ENCODE measurements at regions of chr6 and their contacts with region 1.

Region 1: GRCh38 chr6:39892490-39893129 is 41.7 kb downstream of the MOCS1 start:
- DNase-seq: peak in 5 of 6 donors; percentile 45 to 82 (median 66)
- ATAC-seq: peak; percentile 85 to 95 (median 92)
- H3K4me3 ChIP-seq: no peak overlapping the region
- H3K27ac ChIP-seq: no peak overlapping the region
- H3K4me1 ChIP-seq: no peaks in the 10 kb centered on the region
- H3K27me3 ChIP-seq: no peaks in the 10 kb centered on the region
- CTCF ChIP-seq: peak; percentile 48 to 66 (median 62)

Region 2: DNA sequence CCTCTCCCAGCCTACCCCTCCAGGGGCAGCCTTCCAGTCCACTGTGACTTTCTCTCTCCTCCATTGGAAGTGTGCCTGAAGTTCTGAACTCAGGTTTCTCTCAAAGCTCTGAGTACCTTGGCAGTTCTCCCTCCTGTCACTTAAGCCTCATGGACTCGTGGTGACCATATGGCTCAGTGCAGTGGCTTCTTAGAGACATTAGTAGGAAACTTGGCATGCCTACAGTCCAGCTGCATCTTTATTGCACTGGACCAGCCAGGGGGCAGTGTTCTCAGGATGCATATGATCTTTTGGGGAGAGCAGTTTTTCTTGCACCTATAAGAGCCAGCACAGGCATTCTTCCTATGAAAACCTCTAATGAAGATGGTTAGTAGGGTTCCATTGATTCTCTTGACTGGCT is 522.6 kb before region 1 on chr6:
- intact Hi-C with region 1: loop called in 2 of 3 experiments (anchors 5 to 10 kb)
- DNase-seq: peak in 2 of 6 donors; percentile 16 to 29
- ATAC-seq: peak; percentile 48 to 74 (median 68)
- H3K4me3 ChIP-seq: no peak overlapping the region
- H3K27ac ChIP-seq: no peak overlapping the region
- H3K4me1 ChIP-seq: no peaks in the 10 kb centered on the region
- H3K27me3 ChIP-seq: no peaks in the 10 kb centered on the region
- CTCF ChIP-seq: peak in 1 of 4 donors; percentile 15

Measured in pancreas (tissue), 10 donors.